ENCODE measurements at regions of chr5 and their contacts with region 1.

Region 1: GRCh38 chr5:139787568-139788293 is 7.9 kb upstream of the PSD2 start:
- DNase-seq: peak; percentile 98
- H3K4me3 ChIP-seq: peak overlapping the region; percentile 56 to 80
- H3K27ac ChIP-seq: no peak overlapping the region; a peak in 1 of 4 replicates
- H3K4me1 ChIP-seq: peaks cover 0 to 3% of the 10 kb centered on the region in 2 experiments; a peak in 1 of 4 replicates
- H3K27me3 ChIP-seq: no peaks in the 10 kb centered on the region; the same call in 1 of the 2 replicates
- CTCF ChIP-seq: peak; percentile 87
- EP300 ChIP-seq: no peak
- RAD21 ChIP-seq: peak; percentile 96

Region 2: DNA sequence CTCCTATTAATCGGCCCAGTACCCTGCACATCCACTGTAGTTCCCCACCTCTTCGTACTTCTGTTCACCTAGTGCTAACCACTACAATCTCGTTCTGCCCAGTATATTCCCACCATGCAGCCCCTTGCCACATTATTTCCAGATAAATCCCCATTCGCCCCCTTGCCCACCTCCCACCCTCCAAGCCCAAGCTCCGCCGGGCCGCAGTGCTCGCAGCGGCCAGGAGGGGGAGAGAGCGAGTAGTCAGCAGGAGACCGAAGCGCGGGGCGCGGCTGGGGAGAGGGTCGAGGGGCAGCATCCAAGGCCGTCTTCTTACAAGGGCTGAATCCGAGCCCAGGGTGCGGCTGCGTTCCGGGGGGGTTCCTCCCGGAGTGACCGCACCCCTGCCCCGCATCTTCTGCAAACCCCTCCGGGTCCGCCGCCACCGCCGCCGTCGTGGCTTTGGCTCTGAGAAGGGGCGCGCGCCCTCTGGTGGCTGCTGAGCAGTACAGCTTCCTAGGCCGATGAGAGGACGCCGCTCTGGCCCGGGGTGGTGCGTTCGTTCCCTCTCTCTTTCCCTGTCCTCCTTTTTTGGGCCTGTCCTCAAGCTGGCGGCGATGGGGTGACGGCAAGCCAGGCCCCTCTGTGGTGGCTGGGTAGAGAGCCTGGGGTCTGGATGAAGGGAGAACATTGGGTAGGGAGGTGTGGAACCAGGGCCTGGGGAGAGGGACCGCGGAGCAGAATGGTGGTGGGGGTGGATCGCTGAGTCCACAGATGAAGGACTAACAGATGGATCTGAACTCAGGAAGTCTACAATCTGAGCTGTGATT is 22.1 kb before region 1 on chr5:
- CTCF ChIA-PET with region 1: interaction called, 29 read pairs
- POLR2A ChIA-PET with region 1: no interaction called
- DNase-seq: peak; percentile 93
- H3K4me3 ChIP-seq: peak overlapping the region; percentile 56 to 85
- H3K27ac ChIP-seq: peak overlapping the region in 1 of 2 experiments; percentile 56; a peak in 1 of 4 replicates
- H3K4me1 ChIP-seq: peaks cover 2 to 29% of the 10 kb centered on the region in 2 experiments; a peak in 3 of 4 replicates
- H3K27me3 ChIP-seq: no peaks in the 10 kb centered on the region
- CTCF ChIP-seq: peak; percentile 97
- EP300 ChIP-seq: peak in 1 of 2 experiments; percentile 14; a peak in 1 of 4 replicates
- RAD21 ChIP-seq: peak; percentile 73

Region 3: GRCh38 chr5:139828207-139828895 is 40.6 kb after region 1 on chr5:
- CTCF ChIA-PET with region 1: interaction called, 17 read pairs
- POLR2A ChIA-PET with region 1: no interaction called
- DNase-seq: no peak
- H3K4me3 ChIP-seq: no peak overlapping the region
- H3K27ac ChIP-seq: no peak overlapping the region
- H3K4me1 ChIP-seq: no peaks in the 10 kb centered on the region
- H3K27me3 ChIP-seq: peaks cover 18% of the 10 kb centered on the region
- CTCF ChIP-seq: no peak
- EP300 ChIP-seq: no peak
- RAD21 ChIP-seq: no peak

Region 4: DNA sequence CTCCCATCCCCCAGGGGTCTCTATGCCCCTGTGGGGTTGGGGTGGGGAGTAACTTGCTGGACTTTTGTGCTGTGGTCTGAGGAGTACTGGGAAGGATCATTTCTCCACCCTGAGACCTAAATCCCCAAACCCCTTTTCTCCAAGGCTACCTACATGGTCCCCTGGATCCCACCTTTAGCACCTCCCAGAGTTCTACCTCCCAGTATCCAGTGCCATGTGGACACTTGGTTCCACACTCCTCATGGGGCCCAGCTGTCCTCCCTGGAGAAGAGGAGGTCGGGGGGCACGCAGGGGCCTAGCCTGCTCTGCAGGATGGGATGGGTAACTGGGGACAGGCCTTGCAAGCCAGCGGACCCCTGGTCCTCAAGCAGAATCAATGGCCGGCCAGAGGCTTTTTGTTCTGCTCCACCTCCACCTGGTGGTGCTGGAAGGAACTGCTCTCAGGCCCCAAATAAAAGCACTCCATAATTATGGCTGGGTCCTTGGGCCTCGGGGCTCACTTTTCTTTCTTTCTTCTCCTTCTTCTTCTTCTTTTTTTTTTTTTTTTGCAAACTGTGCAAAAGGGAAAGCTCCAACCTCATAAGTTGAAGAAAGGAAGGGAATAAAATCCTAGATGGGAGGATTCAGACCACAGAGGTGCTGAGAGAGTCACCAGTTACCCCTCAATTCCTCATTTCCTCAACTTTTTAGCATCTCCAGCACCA is 76.3 kb after region 1 on chr5:
- CTCF ChIA-PET with region 1: interaction called, 225 read pairs
- POLR2A ChIA-PET with region 1: no interaction called
- DNase-seq: peak; percentile 85
- H3K4me3 ChIP-seq: no peak overlapping the region
- H3K27ac ChIP-seq: no peak overlapping the region
- H3K4me1 ChIP-seq: peaks cover 0 to 2% of the 10 kb centered on the region in 2 experiments; a peak in 1 of 4 replicates
- H3K27me3 ChIP-seq: no peaks in the 10 kb centered on the region
- CTCF ChIP-seq: peak; percentile 79
- EP300 ChIP-seq: no peak
- RAD21 ChIP-seq: peak; percentile 79

Region 5: DNA sequence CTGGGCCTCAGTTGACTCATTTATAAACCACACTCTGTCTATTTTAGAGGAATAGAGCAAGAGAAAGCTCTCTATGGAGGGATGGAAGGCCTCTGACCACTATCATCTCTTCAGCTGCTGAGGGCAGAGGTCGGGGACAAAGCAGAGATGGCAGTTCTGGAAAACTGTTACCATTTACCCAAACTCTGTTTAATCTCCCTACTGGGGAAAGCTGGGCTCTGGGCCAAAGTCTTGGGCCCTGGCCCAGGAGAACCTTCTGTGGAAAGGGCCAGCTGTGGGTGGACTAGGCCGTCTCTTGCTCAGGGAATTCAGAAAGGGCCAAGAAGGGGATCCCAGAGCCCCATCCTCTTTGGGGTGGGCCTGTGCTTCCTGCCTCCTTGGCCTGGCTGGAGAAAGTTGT is 107.9 kb after region 1 on chr5:
- CTCF ChIA-PET with region 1: interaction called, 62 read pairs
- POLR2A ChIA-PET with region 1: no interaction called
- DNase-seq: no peak
- H3K4me3 ChIP-seq: no peak overlapping the region
- H3K27ac ChIP-seq: peak overlapping the region in 1 of 2 experiments; percentile 97; a peak in 2 of 4 replicates
- H3K4me1 ChIP-seq: peaks cover 0 to 65% of the 10 kb centered on the region in 2 experiments; a peak in 2 of 4 replicates
- H3K27me3 ChIP-seq: no peaks in the 10 kb centered on the region
- CTCF ChIP-seq: no peak
- EP300 ChIP-seq: peak in 1 of 2 experiments; percentile 38; a peak in 1 of 4 replicates
- RAD21 ChIP-seq: no peak

Region 6: GRCh38 chr5:140042643-140043500 is 255.1 kb after region 1 on chr5 and contains the start of gene NRG2:
- CTCF ChIA-PET with region 1: interaction called, 16 read pairs
- POLR2A ChIA-PET with region 1: interaction called, 3 read pairs
- DNase-seq: peak; percentile 94
- H3K4me3 ChIP-seq: peak within 1 kb of the TSS; percentile 88 to 92
- H3K27ac ChIP-seq: peak within 1 kb of the TSS; percentile 67 to 93; a peak in 3 of 4 replicates
- H3K4me1 ChIP-seq: peaks cover 0 to 32% of the 10 kb centered on the region in 2 experiments; a peak in 2 of 4 replicates
- H3K27me3 ChIP-seq: 0 out of 2 replicates have a peak, but pooled peaks cover 4% of the 10 kb centered on the region
- CTCF ChIP-seq: peak; percentile 62
- EP300 ChIP-seq: no peak
- RAD21 ChIP-seq: no peak
- polyA plus RNA-seq, gene NRG2: 3.5 and 3.7 TPM in 2 replicates

Region 7: GRCh38 chr5:140175367-140176030 is 387.8 kb after region 1 on chr5:
- CTCF ChIA-PET with region 1: no interaction called
- POLR2A ChIA-PET with region 1: no interaction called
- DNase-seq: peak; percentile 83
- H3K4me3 ChIP-seq: peak overlapping the region; percentile 81 to 92
- H3K27ac ChIP-seq: peak overlapping the region; percentile 66 to 78
- H3K4me1 ChIP-seq: peaks cover 0 to 13% of the 10 kb centered on the region in 2 experiments; a peak in 2 of 4 replicates
- H3K27me3 ChIP-seq: no peaks in the 10 kb centered on the region
- CTCF ChIP-seq: peak; percentile 33; the same call in 1 of the 2 replicates
- EP300 ChIP-seq: no peak
- RAD21 ChIP-seq: no peak